Activated T-helper 1 cell treated with anti-CD3 and anti-CD28 coated beads, Interleukin-12 subunit alpha, Interleukin-12 subunit beta, Interleukin-2, Interleukin-4 antibody, amounts not matched to agents 30 ng/mL and 10 ng/mL and 1 ng/mL, durations not matched to agents 14 hours and 24 hours and 36 hours (primary cell): ENCODE measurements at regions of chr16 and their contacts with region 1.

Region 1: DNA sequence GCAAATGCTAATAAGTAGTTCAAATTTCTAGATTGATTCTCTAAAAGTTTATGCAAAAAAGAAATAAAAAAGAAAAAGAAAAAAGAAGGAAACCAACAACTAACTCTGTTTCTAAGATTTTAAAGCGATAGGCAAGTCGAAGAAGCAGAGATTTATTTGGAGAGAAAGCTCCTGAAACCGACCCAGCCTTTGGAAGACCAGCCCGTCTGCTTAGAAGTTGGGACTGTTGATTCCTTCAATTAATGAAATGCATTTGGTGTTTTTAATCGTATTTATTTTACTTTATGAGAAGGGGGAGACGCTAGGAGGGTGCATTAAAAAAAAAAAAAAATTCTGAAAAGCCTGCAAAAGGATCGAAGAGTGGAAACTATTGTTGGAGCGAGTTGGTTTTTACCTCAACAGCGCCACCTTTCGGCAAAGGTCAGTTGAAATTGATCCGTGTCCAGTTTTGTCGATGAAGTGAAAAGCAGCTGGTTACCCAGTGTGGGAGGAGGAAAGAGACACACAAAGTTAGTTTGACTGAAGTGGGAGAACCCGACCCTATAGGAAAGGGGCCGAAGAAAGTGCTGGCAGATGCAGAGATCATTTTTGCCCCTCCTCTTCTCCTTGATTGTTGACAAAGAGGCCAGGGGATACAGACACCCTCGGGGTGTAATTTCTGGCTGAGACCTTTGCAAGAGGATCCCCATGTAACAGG is 1.5 kb upstream of the MAF start:
- DNase-seq: peak; percentile 75
- H3K4me3 Mint-ChIP-seq: peak overlapping the region; percentile 92
- H3K27ac Mint-ChIP-seq: peak overlapping the region; percentile 98
- H3K4me1 Mint-ChIP-seq: peaks cover 51% of the 10 kb centered on the region
- H3K27me3 Mint-ChIP-seq: peaks cover 9% of the 10 kb centered on the region

Region 2: DNA sequence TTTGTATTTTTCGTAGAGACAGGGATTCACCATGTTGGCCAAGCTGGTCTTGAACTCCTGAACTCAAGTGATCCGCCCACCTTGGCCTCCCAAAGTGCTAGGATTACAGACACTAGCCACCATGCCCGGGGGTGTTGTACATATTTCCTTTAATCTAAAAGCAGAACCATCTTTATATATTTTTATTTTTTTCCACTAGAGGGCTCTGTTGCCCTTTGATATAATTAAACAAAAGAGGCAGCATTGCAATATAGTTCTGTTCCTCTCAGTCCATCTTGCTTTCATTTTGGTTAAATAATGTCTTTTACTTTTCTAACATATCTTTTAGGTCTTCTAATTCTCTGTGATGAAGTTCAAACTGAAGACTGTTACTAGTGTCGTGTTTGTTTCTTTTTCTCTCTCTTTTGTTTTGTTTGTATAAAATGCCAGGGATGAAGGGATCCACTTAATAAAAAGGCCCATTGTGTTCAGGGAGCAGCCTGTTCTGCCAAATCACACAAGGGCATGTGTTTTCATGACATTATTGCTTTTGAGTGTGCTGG is 1479.2 kb before region 1 on chr16:
- intact Hi-C with region 1: loop called (anchors 2 kb)
- DNase-seq: no peak
- H3K4me3 Mint-ChIP-seq: no peak overlapping the region
- H3K27ac Mint-ChIP-seq: no peak overlapping the region
- H3K4me1 Mint-ChIP-seq: peaks cover 5% of the 10 kb centered on the region
- H3K27me3 Mint-ChIP-seq: no peaks in the 10 kb centered on the region

Region 3: GRCh38 chr16:78778101-78779004 is 823.7 kb before region 1 on chr16:
- intact Hi-C with region 1: loop called (anchors 1 kb)
- DNase-seq: peak; percentile 63
- H3K4me3 Mint-ChIP-seq: peak overlapping the region; percentile 57
- H3K27ac Mint-ChIP-seq: peak overlapping the region; percentile 77
- H3K4me1 Mint-ChIP-seq: peaks cover 73% of the 10 kb centered on the region
- H3K27me3 Mint-ChIP-seq: no peaks in the 10 kb centered on the region

Region 4: DNA sequence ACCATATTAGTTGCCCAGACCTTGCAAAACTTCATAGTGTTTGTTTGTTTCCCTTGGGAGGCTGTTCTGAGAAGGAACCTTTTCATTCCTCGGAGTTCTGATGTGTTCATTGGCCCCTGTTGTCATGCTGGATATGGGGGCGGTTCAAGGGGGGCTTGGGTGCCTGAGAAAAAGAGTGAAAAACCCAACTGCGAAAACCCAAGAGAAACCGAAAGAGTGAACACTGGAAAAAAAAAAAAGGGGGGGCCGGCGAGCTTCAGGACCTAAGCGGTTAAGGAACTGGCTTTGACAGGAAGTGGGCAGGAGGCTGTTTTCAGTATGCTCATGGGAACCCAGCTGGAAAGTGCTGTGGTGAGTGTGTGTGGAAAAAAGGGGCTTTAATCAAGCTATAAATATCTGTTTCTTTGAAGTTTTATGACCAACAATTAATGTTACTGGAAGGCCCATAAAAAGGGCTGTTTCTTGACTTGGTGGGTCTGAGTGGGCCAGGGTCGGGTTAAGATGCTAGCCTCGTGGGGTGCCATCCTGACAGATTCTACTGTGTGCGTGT is 512.3 kb before region 1 on chr16:
- intact Hi-C with region 1: loop called (anchors 1 kb)
- DNase-seq: peak; percentile 66
- H3K4me3 Mint-ChIP-seq: peak overlapping the region; percentile 62
- H3K27ac Mint-ChIP-seq: peak overlapping the region; percentile 95
- H3K4me1 Mint-ChIP-seq: peaks cover 53% of the 10 kb centered on the region
- H3K27me3 Mint-ChIP-seq: no peaks in the 10 kb centered on the region

Region 5: DNA sequence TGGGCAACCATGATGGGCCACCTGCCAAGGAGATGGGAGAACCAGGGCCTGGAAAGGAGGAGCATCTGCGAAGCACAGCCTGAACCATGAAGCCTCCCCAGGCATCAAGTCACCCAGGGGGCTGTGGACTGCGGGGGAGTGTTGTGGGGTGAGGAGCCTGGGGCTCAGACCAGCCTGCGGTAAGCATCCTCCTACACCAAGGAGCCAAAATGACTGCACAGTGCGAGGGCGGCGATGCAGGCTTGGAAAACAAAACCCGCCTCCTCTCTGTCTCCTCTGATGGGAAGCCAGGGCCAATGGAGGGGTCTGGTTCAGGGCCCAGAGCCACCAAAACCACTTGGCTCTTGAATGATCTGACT is 16.6 kb after region 1 on chr16:
- intact Hi-C with region 1: loop called (anchors 1 kb)
- DNase-seq: peak; percentile 37
- H3K4me3 Mint-ChIP-seq: peak overlapping the region; percentile 46
- H3K27ac Mint-ChIP-seq: peak overlapping the region; percentile 91
- H3K4me1 Mint-ChIP-seq: peaks cover 75% of the 10 kb centered on the region
- H3K27me3 Mint-ChIP-seq: peaks cover 6% of the 10 kb centered on the region

Region 6: DNA sequence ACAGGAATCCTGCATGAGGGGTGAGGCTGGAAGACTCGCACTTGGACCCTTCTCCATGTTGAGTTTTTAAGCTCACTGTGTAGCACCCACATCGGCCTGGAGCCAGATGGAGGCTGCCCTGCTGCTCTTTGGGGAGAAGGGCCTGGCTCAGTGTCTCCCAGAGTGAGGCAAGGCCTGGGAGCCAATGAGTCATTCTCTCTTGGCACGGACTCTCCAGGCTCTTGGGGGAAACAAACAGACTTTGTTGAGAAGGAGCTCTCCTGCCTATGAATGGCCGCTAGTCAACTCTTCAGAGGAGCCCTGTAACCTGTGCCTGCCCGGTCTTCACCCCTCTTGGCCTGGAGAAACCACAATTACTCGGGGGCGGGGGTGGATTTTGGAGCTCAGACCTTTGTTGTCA is 49.3 kb after region 1 on chr16:
- intact Hi-C with region 1: no loop called
- DNase-seq: no peak
- H3K4me3 Mint-ChIP-seq: no peak overlapping the region
- H3K27ac Mint-ChIP-seq: no peak overlapping the region
- H3K4me1 Mint-ChIP-seq: peaks cover 7% of the 10 kb centered on the region
- H3K27me3 Mint-ChIP-seq: peaks cover 5% of the 10 kb centered on the region

Region 7: DNA sequence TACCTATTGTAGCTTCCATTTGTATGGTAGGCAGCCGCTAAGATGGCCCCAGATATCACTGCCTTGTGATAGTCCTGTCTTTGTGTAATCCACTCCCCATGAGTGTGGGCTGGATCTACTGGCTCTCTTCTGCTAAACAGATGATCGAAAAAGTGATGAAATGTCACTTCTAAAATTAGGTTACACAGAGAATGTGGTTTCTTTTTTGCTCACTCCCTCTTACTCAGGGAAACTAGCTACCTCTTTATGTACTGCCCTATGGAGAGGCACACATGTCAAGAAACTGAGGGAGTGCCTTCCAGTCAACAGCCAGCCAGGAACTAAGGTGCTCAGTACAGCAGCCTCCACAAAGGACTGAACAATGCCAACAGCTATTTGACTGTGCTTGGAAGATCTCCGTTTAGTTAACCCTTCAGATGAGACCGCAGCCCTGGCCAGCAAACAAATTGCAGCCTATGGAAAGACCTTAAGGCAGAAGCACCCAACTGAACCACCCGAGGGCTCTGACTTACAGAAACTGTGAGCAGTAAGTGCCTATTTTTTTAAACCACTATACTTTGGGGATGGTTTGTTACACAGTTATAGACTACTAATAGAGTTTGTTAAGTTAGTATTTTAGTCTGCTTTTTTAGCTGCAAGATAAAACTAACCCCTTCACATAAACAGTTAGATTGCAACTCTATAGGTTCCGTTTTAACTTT is 111.7 kb after region 1 on chr16:
- intact Hi-C with region 1: loop called (anchors 5 kb)
- DNase-seq: no peak
- H3K4me3 Mint-ChIP-seq: peak overlapping the region; percentile 42
- H3K27ac Mint-ChIP-seq: peak overlapping the region; percentile 51
- H3K4me1 Mint-ChIP-seq: peaks cover 25% of the 10 kb centered on the region
- H3K27me3 Mint-ChIP-seq: peaks cover 4% of the 10 kb centered on the region

Region 8: DNA sequence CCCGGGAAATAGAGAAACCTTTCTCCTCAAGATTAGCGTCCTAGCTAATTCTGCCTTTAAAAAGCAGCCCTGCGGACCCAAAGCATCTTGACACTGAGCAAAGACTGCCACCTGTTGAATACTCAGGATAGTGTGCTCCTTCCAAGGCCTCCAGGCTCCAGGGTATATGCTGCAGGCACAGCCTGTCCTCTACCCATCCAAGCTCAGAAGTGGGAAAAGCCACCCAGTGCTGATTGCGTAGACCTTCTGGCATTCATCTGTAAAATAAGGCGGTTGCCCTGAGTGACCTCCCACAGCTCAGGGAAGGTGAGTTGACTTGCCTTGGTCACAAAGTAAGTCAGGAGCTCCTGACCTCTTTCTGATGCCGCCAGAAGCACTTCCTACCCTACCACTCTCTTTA is 482.6 kb after region 1 on chr16:
- intact Hi-C with region 1: loop called (anchors 2 kb)
- DNase-seq: no peak
- H3K4me3 Mint-ChIP-seq: no peak overlapping the region
- H3K27ac Mint-ChIP-seq: no peak overlapping the region
- H3K4me1 Mint-ChIP-seq: no peaks in the 10 kb centered on the region
- H3K27me3 Mint-ChIP-seq: peaks cover 11% of the 10 kb centered on the region